PC-9 (cell line): ENCODE measurements at regions of chr18 and their contacts with region 1.

Region 1: GRCh38 chr18:49588971-49589370 is 27.1 kb downstream of the LIPG start:
- DNase-seq: no peak
- H3K4me3 ChIP-seq: no peak overlapping the region
- H3K27ac ChIP-seq: no peak overlapping the region
- H3K4me1 ChIP-seq: no peaks in the 10 kb centered on the region
- H3K27me3 ChIP-seq: no peaks in the 10 kb centered on the region
- CTCF ChIP-seq: no peak

Region 2: GRCh38 chr18:51171223-51171622 is 1582.3 kb after region 1 on chr18:
- CTCF ChIA-PET with region 1: no interaction called
- POLR2A ChIA-PET with region 1: interaction called, 10 read pairs
- intact Hi-C with region 1: no loop called
- DNase-seq: no peak
- H3K4me3 ChIP-seq: no peak overlapping the region
- H3K27ac ChIP-seq: no peak overlapping the region
- H3K4me1 ChIP-seq: no peaks in the 10 kb centered on the region
- H3K27me3 ChIP-seq: no peaks in the 10 kb centered on the region
- CTCF ChIP-seq: no peak